MCF 10A (cell line): ENCODE measurements at regions of chr9 and their contacts with region 1.

Region 1: DNA sequence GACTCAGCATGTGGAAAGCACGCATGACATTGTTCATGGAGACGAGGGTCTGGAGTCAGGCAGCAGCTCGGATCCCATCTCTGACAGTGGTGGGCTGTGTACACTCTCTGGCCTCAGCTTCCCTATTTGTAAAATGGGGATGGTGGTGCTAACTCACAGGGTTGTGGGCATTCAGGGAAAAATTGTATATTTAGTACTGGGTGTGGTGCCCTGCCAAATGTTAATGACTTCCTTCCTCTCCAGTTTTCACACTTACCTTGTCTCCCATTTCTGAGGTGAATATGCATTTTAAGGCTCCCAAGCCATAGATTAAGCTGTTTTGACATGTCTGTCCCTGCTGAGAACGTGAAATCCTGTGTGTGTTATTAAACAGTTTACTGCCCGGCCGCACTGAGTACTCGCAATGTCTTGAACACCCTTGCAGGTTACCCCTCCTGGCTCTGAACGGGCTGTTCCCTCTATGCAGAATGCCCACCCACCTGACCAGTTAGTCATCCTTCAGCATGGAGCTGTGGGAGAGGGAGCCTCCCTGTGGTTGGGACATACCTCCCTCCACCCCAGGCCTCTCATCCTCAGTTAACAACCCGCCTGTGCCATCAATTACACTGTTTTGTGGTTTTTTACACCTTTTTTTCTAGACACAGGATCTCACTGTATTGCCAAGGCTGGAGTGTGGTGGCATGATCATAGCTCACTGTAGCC is 25.8 kb downstream of the TJP2 start:
- DNase-seq: peak; percentile 73
- H3K4me3 Mint-ChIP-seq: no peak overlapping the region
- H3K27ac Mint-ChIP-seq: no peak overlapping the region
- H3K4me1 Mint-ChIP-seq: peaks cover 26% of the 10 kb centered on the region
- H3K27me3 Mint-ChIP-seq: no peaks in the 10 kb centered on the region
- CTCF ChIP-seq: no peak

Region 2: GRCh38 chr9:69044240-69045219 is 155.4 kb before region 1 on chr9:
- CTCF ChIA-PET with region 1: interaction called, 481 read pairs
- POLR2A ChIA-PET with region 1: no interaction called
- intact Hi-C with region 1: no loop called
- DNase-seq: no peak
- H3K4me3 Mint-ChIP-seq: no peak overlapping the region
- H3K27ac Mint-ChIP-seq: peak overlapping the region; percentile 50
- H3K4me1 Mint-ChIP-seq: peaks cover 6% of the 10 kb centered on the region
- H3K27me3 Mint-ChIP-seq: no peaks in the 10 kb centered on the region
- CTCF ChIP-seq: no peak

Region 3: DNA sequence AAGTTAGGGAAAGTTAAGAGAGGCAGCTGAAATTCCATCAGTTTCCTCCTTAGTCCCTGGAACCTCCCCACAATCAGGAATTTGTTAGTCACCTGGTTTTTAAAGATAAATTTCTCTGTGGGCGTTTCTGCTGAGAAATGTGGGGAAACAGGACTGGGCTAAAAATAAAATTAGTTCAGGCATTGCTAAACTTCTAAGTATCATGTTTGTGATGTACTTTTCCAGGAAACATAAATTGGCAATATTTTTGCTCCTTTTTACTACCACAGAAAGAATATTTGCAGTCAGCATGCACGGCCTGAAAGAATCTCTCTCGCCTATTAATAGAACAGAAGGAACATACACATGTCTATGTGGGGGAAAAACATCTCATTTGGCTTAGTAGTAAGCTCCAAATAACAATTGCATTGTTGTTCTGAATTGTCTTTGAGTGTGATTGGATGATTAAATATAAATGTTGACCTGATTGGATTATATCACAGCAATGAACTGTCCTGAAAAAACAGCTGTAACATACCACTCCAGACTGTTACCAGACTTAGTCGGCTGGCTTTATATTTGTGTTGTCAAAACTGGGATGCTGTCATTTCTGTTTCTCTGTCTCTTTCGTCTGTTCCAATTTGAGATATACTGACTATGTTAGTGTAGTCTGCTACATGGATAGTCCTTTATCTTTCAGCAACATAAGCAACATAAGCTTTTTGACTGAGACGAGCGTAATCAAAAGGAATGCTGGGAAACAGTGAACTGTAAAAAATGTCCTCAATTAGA is 12.9 kb before region 1 on chr9:
- CTCF ChIA-PET with region 1: interaction called, 35 read pairs
- POLR2A ChIA-PET with region 1: interaction called, 4 read pairs
- intact Hi-C with region 1: no loop called
- DNase-seq: peak; percentile 53
- H3K4me3 Mint-ChIP-seq: no peak overlapping the region
- H3K27ac Mint-ChIP-seq: peak overlapping the region; percentile 62
- H3K4me1 Mint-ChIP-seq: peaks cover 25% of the 10 kb centered on the region
- H3K27me3 Mint-ChIP-seq: no peaks in the 10 kb centered on the region
- CTCF ChIP-seq: no peak

Region 4: GRCh38 chr9:69622676-69623075 is 422.8 kb after region 1 on chr9:
- CTCF ChIA-PET with region 1: no interaction called
- POLR2A ChIA-PET with region 1: no interaction called
- intact Hi-C with region 1: no loop called
- DNase-seq: no peak
- H3K4me3 Mint-ChIP-seq: no peak overlapping the region
- H3K27ac Mint-ChIP-seq: no peak overlapping the region
- H3K4me1 Mint-ChIP-seq: no peaks in the 10 kb centered on the region
- H3K27me3 Mint-ChIP-seq: peaks cover 53% of the 10 kb centered on the region
- CTCF ChIP-seq: no peak